ENCODE measurements at regions of chr7 and their contacts with region 1.

Region 1: DNA sequence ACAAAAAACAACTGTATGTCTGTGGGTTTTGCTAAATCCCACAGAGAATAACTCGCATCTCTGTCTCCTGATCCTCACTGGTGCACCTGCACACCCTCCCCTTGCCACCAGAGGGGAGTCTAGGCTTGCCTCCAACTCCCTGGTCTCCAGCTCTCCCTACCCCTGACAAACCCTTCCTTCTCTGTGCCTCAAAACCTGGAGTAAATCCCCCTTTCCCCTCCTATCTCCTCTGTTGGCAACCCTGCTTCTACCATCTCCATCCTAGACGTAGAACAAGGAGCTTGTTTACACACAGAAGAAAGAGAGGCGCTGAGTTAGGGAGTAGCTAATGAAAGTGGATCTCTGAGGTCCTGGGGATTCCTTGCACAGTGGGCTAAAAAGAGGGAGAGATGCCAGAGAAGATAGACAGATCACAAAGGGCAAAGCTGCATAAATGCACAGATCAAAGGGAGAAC is 6.0 kb downstream of the MBLAC1 start:
- DNase-seq: peak; percentile 81
- H3K4me3 Mint-ChIP-seq: no peak overlapping the region
- H3K27ac Mint-ChIP-seq: no peak overlapping the region
- H3K4me1 Mint-ChIP-seq: peaks cover 36% of the 10 kb centered on the region
- H3K27me3 Mint-ChIP-seq: peaks cover 16% of the 10 kb centered on the region

Region 2: DNA sequence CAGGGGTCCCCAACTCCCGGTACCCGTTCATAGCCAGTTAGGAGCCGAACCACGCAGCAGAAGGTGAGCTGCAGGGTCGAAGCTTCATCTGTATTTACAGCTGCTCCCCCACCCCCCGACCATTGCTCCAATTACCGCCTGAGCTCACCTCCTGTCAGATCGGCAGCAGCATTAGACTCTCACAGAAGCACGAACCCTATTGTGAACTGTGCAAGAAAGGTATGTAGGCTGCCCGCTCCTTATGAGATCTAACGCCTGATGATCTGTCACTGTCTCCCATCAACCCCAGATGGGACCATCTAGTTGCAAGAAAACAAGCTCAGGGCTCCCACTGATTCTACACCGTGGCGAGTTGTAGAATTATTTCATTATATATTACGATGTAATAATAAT is 142.3 kb before region 1 on chr7:
- CTCF ChIA-PET with region 1: interaction called, 22 read pairs
- DNase-seq: no peak
- H3K4me3 Mint-ChIP-seq: no peak overlapping the region
- H3K27ac Mint-ChIP-seq: no peak overlapping the region
- H3K4me1 Mint-ChIP-seq: peaks cover 17% of the 10 kb centered on the region
- H3K27me3 Mint-ChIP-seq: peaks cover 49% of the 10 kb centered on the region

Region 3: GRCh38 chr7:100049441-100050311 is 83.0 kb before region 1 on chr7 and contains the start of gene ZSCAN21:
- CTCF ChIA-PET with region 1: no interaction called
- DNase-seq: peak; percentile 85
- H3K4me3 Mint-ChIP-seq: peak within 1 kb of the TSS; percentile 84
- H3K27ac Mint-ChIP-seq: peak within 1 kb of the TSS; percentile 89
- H3K4me1 Mint-ChIP-seq: peaks cover 22% of the 10 kb centered on the region
- H3K27me3 Mint-ChIP-seq: peaks cover 12% of the 10 kb centered on the region

Region 4: GRCh38 chr7:100148559-100149350 is 16.0 kb after region 1 on chr7 and contains the start of gene LAMTOR4:
- CTCF ChIA-PET with region 1: interaction called, 13 read pairs
- DNase-seq: peak; percentile 99
- H3K4me3 Mint-ChIP-seq: peak within 1 kb of the TSS; percentile 96
- H3K27ac Mint-ChIP-seq: peak within 1 kb of the TSS; percentile 90
- H3K4me1 Mint-ChIP-seq: peaks cover 48% of the 10 kb centered on the region
- H3K27me3 Mint-ChIP-seq: no peaks in the 10 kb centered on the region

Region 5: DNA sequence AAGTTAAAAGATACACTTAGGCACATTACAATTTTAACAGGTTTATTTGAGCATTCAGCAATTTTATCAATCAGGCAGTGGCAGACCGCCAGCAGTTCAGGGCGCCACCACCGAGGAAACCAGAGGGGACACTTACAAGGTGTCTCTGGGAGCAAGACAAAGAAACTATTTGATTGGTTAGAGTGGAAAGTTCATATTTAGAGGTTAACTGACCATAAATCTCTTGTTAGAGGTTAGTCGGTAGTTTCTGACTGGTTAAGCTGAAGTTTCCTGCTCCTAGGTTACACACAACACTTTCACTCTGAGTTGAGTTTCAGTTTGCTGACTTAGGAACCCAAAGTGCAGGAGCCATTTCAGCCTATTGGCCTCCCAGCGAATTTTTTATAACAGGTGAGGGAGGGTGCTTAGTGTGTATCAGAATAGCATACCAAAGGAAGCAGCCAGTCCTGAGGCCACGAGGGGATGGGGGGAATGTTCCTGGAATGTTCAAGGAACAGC is 76.2 kb after region 1 on chr7:
- CTCF ChIA-PET with region 1: interaction called, 13 read pairs
- DNase-seq: peak; percentile 69
- H3K4me3 Mint-ChIP-seq: peak overlapping the region; percentile 49
- H3K27ac Mint-ChIP-seq: peak overlapping the region; percentile 85
- H3K4me1 Mint-ChIP-seq: peaks cover 56% of the 10 kb centered on the region
- H3K27me3 Mint-ChIP-seq: no peaks in the 10 kb centered on the region

Region 6: DNA sequence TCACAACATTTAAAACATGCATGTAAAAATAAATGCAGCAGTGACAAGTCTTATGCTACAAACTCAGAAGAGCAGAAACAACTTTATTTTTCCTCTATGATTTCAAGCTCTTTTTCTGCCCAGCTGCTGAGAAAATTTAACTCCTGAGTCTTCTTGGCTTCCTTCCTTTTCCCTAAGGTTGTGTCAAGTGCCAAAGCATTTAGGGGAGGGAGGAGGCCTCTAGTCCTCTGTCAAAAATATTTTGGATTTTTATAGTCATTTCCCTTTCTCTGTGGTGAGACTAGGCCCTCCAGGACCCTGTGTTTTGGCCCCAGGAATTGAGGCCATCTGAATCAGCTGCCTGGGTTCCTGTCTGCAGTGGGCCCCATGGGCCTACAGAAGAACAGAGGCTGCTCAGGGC is 214.2 kb after region 1 on chr7:
- CTCF ChIA-PET with region 1: interaction called, 13 read pairs
- DNase-seq: no peak
- H3K4me3 Mint-ChIP-seq: no peak overlapping the region
- H3K27ac Mint-ChIP-seq: peak overlapping the region; percentile 49
- H3K4me1 Mint-ChIP-seq: peaks cover 50% of the 10 kb centered on the region
- H3K27me3 Mint-ChIP-seq: no peaks in the 10 kb centered on the region

Measured in activated naive CD4-positive, alpha-beta T cell treated with anti-CD3 and anti-CD28 coated beads, Interleukin-2, amount 10 ng/mL, durations not matched to agents 7 days and 5 days (primary cell).